Spleen (tissue), 13 donors: ENCODE measurements at regions of chr10 and their contacts with region 1.

Region 1: DNA sequence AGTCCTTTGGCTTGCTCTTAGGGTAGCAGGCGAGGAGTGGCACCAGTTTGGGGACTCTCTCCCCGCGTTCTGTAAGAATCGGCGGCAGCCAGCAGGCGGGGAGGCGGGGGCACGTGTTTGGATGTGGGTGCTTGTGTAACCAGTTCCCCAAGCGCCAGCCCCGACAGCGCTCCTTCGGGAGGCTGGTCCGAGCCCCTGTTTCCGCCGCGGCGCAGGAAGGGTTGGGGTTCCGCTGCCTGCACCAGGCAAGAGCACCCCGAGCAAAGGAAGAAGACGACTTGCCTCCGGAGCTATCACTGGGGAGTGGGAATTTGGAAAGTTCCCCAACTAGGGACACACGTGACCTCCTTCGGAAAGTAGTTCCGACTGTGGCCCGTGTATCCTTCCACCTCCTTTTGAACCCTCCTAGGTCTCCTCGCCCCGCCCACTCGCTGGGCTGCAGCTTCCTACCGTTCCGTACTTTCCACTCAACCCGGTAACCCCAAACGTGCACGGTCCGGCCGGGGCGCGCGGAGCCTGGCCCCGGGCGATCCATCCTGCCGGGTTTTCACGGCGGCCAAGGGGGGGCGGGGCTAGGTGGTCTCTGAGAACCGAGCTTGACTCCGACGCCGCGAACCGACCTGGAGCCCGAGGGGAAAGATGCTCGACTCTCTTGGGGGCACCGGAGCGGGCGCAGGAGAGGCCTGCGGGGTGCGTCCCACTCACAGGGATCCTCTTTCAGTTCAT is 1.2 kb downstream of the KLLN start:
- DNase-seq: peak; percentile 99
- H3K4me3 ChIP-seq: peak overlapping the region; percentile 83 to 96 (median 91)
- H3K27ac ChIP-seq: peak overlapping the region; percentile 90 to 100 (median 99)
- H3K4me1 ChIP-seq: peaks cover 11 to 41% (median 37%) of the 10 kb centered on the region in 6 donors
- H3K27me3 ChIP-seq: no peaks in the 10 kb centered on the region
- CTCF ChIP-seq: peak in 6 of 11 experiments; percentile 1 to 20 (median 18)
- POLR2A ChIP-seq: peak; percentile 39 to 58 (median 58)

Region 2: GRCh38 chr10:86668297-86669165 is 1193.6 kb before region 1 on chr10 and contains the start of gene LDB3:
- intact Hi-C with region 1: no loop called
- DNase-seq: no peak
- H3K4me3 ChIP-seq: no peak within 1 kb of the TSS
- H3K27ac ChIP-seq: no peak within 1 kb of the TSS
- H3K4me1 ChIP-seq: peaks cover 0 to 7% (median 0%) of the 10 kb centered on the region in 6 donors
- H3K27me3 ChIP-seq: peaks cover 0 to 23% (median 0%) of the 10 kb centered on the region in 7 donors
- CTCF ChIP-seq: no peak
- POLR2A ChIP-seq: no peak
- total RNA-seq, gene LDB3: 0.14 to 0.63 (median 0.43) TPM in 5 of 7 donors, not detected in the others

Region 3: GRCh38 chr10:87761892-87762291 is 100.2 kb before region 1 on chr10:
- intact Hi-C with region 1: no loop called
- DNase-seq: no peak
- H3K4me3 ChIP-seq: no peak overlapping the region
- H3K27ac ChIP-seq: no peak overlapping the region
- H3K4me1 ChIP-seq: peaks cover 0 to 10% (median 2%) of the 10 kb centered on the region in 6 donors
- H3K27me3 ChIP-seq: no peaks in the 10 kb centered on the region
- CTCF ChIP-seq: no peak
- POLR2A ChIP-seq: no peak

Region 4: GRCh38 chr10:87931836-87932230 is 69.7 kb after region 1 on chr10:
- intact Hi-C with region 1: loop called (anchors 10 kb)
- DNase-seq: no peak
- H3K4me3 ChIP-seq: no peak overlapping the region
- H3K27ac ChIP-seq: peak overlapping the region in 1 of 8 donors; percentile 32
- H3K4me1 ChIP-seq: peaks cover 34 to 89% (median 66%) of the 10 kb centered on the region in 6 donors
- H3K27me3 ChIP-seq: no peaks in the 10 kb centered on the region
- CTCF ChIP-seq: no peak
- POLR2A ChIP-seq: no peak

Region 5: GRCh38 chr10:88042160-88043100 is 180.3 kb after region 1 on chr10:
- intact Hi-C with region 1: no loop called
- DNase-seq: no peak
- H3K4me3 ChIP-seq: no peak overlapping the region
- H3K27ac ChIP-seq: peak overlapping the region in 5 of 8 donors; percentile 10 to 75 (median 61)
- H3K4me1 ChIP-seq: peaks cover 0 to 68% (median 13%) of the 10 kb centered on the region in 6 donors
- H3K27me3 ChIP-seq: no peaks in the 10 kb centered on the region
- CTCF ChIP-seq: no peak
- POLR2A ChIP-seq: no peak

Region 6: DNA sequence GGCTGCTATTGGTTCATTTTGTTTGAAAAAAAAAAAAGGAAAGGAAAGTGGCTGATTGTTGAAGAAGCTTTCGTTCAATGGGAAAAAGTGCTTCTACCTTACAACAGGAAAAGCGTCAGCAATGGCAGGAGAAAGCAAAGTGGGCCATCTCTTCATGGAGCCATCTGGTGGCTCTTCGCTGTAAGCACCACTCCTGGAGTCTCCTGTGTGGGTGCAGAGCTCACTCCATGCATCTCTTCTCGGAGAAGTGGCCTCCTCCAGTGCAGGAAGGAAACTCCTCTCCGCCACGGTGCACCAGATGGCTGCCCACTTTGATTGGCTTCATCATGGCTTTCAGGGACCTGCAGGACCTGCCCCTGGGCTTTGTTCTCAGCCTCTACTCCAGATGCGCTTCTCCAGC is 252.3 kb after region 1 on chr10:
- intact Hi-C with region 1: loop called (anchors 5 kb)
- DNase-seq: no peak
- H3K4me3 ChIP-seq: no peak overlapping the region
- H3K27ac ChIP-seq: peak overlapping the region in 5 of 8 donors; percentile 28 to 77 (median 69)
- H3K4me1 ChIP-seq: peaks cover 38 to 95% (median 72%) of the 10 kb centered on the region in 6 donors
- H3K27me3 ChIP-seq: no peaks in the 10 kb centered on the region
- CTCF ChIP-seq: peak; percentile 34 to 81 (median 70)
- POLR2A ChIP-seq: no peak

Region 7: GRCh38 chr10:88386821-88387773 is 525.0 kb after region 1 on chr10:
- intact Hi-C with region 1: loop called (anchors 5 kb)
- DNase-seq: no peak
- H3K4me3 ChIP-seq: peak overlapping the region in 2 of 8 donors; percentile 2 to 46
- H3K27ac ChIP-seq: peak overlapping the region; percentile 76 to 91 (median 82)
- H3K4me1 ChIP-seq: peaks cover 26 to 92% (median 63%) of the 10 kb centered on the region in 6 donors
- H3K27me3 ChIP-seq: no peaks in the 10 kb centered on the region
- CTCF ChIP-seq: no peak
- POLR2A ChIP-seq: no peak

Region 8: GRCh38 chr10:88525371-88526079 is 663.4 kb after region 1 on chr10:
- intact Hi-C with region 1: no loop called
- DNase-seq: no peak
- H3K4me3 ChIP-seq: no peak overlapping the region
- H3K27ac ChIP-seq: no peak overlapping the region
- H3K4me1 ChIP-seq: peaks cover 0 to 7% (median 0%) of the 10 kb centered on the region in 6 donors
- H3K27me3 ChIP-seq: no peaks in the 10 kb centered on the region
- CTCF ChIP-seq: no peak
- POLR2A ChIP-seq: no peak